ENCODE measurements at regions of chr4 and their contacts with region 1.

Region 1: GRCh38 chr4:145234091-145234706 is 53.8 kb upstream of the OTUD4 start:
- DNase-seq: peak; percentile 80
- H3K4me3 Mint-ChIP-seq: no peak overlapping the region
- H3K27ac Mint-ChIP-seq: no peak overlapping the region
- H3K4me1 Mint-ChIP-seq: no peaks in the 10 kb centered on the region
- H3K27me3 Mint-ChIP-seq: no peaks in the 10 kb centered on the region

Region 2: DNA sequence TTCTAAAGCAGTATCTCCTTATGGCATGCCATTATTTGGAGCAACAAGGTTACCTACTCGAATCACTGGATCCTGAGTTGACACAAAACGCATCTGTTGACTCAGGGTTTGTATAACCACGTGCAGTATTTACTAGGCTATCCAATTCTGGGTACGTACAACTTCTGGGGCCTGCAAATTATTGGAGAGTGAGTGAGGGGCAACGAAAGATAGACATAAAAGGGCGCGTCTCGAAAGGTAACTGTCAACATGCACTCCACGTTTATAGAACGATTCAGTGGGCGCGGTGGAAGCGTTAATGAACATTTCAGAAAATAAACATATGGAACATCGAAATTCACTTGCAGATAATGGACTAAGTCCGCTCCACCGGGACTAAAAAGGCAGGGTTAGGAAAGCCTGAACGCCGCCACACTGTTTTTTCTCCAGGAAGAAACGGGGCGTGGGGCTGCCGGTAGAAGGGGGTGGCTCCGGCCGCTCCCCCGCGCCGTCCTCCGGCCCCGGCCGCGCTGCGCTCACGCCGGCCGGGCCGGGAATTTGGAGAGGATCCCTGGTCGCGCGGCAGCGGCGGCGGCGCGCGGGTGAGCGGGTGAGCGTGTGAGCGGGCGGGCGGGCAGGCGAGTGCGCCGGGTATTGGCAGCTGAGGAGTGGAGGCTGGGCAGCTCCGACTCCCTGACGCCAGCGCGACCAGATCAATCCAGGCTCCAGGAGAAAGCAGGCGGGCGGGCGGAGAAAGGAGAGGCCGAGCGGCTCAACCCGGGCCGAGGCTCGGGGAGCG is 247.2 kb after region 1 on chr4 and contains the start of gene SMAD1:
- CTCF ChIA-PET with region 1: no interaction called
- intact Hi-C with region 1: loop called (anchors 5 kb)
- DNase-seq: peak; percentile 29
- H3K4me3 Mint-ChIP-seq: peak within 1 kb of the TSS; percentile 73
- H3K27ac Mint-ChIP-seq: no peak within 1 kb of the TSS
- H3K4me1 Mint-ChIP-seq: peaks cover 5% of the 10 kb centered on the region
- H3K27me3 Mint-ChIP-seq: peaks cover 31% of the 10 kb centered on the region
- total RNA-seq, gene SMAD1: 0.57 to 0.79 TPM

Region 3: DNA sequence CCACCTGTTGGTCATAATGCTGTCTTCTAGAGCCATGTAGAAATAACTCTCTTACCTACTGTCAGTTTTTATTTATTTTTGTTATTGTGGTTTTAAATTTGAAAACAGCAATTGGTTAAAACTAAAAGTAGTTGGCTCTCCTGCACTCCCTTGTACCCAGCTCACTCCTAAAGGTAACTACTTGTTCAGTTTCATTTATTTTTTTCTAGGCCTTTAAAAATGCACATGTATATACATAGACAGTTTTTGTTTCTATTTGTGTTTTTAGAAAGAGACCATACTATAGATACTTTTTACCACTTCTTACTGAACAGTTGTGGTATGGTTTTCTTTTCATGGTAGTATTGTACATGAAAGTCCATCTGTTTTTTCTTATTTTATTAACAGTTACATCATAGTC is 264.2 kb after region 1 on chr4:
- CTCF ChIA-PET with region 1: interaction called, 3 read pairs
- intact Hi-C with region 1: loop called (anchors 1 kb)
- DNase-seq: no peak
- H3K4me3 Mint-ChIP-seq: no peak overlapping the region
- H3K27ac Mint-ChIP-seq: no peak overlapping the region
- H3K4me1 Mint-ChIP-seq: peaks cover 2% of the 10 kb centered on the region
- H3K27me3 Mint-ChIP-seq: peaks cover 6% of the 10 kb centered on the region

Region 4: DNA sequence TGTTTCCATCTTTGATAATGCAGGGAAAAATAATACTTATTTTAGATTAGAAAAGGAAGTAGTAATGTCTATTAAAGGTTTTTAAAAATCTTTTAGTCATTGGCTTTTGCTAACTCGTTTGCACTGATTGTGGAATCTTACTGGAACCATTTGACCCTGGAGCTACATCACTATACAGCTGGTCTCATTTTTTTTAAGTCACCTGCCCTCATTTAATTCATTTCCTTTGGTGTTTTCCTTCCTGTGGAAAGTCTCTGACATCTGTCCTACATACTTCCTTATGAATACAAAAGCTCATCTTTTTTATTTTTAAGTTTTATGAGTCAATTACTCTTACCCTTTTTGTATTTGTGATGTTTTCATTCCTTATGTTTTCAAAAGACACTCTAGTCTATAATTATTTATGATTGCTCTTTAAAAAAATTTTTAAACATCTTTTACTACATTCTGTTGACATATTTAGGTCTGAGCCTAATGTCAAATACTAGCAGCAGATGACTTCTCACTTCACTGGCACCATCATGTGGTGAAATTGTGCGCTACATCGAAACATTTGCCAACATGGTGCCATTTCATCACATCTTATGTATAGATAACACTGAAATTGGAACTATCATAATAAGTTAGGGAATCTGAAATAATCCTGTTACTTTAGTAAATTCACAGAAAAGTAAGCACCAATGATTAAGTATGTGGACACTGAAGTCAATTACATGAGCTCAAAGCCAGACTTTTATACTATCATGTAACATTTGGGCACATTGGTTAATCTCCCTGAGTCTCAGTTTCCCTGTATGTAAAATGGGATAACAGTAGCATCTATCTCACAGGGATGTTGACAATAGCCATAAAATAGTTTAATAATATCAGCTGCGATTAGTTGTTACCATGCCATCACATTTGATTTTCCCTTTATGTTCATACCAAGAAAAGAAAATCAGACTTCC is 375.6 kb after region 1 on chr4:
- CTCF ChIA-PET with region 1: interaction called, 14 read pairs
- intact Hi-C with region 1: loop called (anchors 1 kb)
- DNase-seq: peak; percentile 86
- H3K4me3 Mint-ChIP-seq: no peak overlapping the region
- H3K27ac Mint-ChIP-seq: no peak overlapping the region
- H3K4me1 Mint-ChIP-seq: peaks cover 13% of the 10 kb centered on the region
- H3K27me3 Mint-ChIP-seq: peaks cover 7% of the 10 kb centered on the region